Keratinocyte (primary cell): ENCODE measurements at regions of chr10 and their contacts with region 1.

Region 1: GRCh38 chr10:51999096-51999495 is 299.7 kb upstream of the CSTF2T start:
- DNase-seq: no peak
- H3K4me3 ChIP-seq: no peak overlapping the region
- H3K27ac ChIP-seq: no peak overlapping the region
- H3K4me1 ChIP-seq: no peaks in the 10 kb centered on the region
- H3K27me3 ChIP-seq: no peaks in the 10 kb centered on the region
- CTCF ChIP-seq: no peak

Region 2: DNA sequence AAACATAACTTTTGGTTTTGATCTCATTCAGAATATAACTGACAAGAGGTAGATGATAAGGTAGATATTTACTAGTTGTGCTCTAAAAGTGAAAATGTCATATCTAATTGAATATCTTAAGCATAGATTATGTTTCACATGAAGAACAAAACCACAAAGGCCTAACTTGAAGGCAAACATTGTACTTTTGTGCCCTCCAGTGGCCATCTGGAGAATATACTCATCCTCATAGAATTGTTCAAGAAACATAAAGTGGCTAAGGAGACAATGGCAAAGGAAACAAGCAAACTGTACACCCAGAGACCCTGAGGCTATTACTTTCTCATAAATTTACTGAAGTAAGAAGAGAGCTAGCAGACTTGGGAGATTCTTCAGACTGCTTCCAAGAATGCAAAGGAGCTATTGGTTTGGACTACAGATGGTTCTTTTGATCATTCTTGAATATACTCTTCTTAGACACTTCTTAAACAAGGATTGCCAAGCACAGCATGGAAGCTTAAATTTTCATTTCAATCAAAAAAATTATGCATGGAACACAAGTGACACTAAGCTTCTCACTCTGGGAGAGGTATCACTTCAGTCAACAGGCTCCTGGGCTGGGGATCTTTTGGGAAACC is 216.8 kb after region 1 on chr10:
- dilution Hi-C with region 1: loop called (anchors 25 kb)
- DNase-seq: no peak
- H3K4me3 ChIP-seq: no peak overlapping the region
- H3K27ac ChIP-seq: no peak overlapping the region
- H3K4me1 ChIP-seq: no peaks in the 10 kb centered on the region
- H3K27me3 ChIP-seq: no peaks in the 10 kb centered on the region
- CTCF ChIP-seq: peak; percentile 31 to 68 (median 44)